ENCODE measurements at regions of chr2 and their contacts with region 1.

Region 1: DNA sequence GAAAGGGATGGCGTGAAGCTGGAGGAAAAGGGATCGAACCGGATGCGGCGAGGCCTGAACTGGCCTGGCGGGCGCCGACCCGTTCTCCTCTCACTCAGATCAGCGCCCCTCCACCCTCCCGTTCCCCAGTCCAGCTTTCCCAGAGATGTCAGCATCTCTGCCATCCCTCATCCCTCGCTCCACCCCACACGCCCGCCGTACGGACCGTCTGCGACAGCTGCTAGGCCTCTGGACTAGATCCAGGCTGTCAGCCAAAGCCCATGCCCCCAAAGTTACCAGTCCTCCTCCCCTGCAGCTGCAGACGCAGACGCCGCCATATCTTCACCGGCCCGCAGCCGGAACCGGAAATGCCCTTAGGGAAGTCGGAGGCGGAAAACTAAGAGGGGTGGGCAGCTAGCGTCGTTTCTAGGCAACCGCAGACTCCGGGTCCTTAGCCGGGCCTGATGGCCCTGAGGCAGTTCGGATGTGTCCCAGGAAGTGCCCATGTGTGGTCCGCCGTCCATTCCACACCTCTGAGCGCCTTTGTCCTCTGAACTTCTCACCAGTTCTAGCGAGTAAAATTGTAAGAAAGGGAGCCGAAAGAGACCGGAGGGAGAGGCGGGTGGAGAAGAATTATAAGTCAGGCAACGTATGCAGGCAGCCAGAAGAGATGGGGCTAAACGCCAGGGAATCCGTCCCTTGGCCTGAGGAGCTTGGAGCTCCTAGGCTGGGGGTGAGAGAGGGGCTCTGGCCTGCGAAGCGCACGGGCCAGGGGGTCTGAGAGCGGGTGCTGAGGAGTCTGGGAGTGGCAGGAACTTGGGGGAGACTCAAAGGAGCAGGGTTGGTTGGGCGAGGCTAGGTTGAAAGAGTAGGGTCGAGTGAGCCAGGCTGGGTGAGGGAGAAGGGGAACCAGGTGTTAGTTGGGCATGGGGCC is at the starts of genes RNF25 and STK36:
- DNase-seq: no peak
- H3K4me3 ChIP-seq: peak within 1 kb of the TSS; percentile 88
- CTCF ChIP-seq: no peak

Region 2: GRCh38 chr2:218659258-218659987 is 12.5 kb before region 1 on chr2 and contains the starts of genes BCS1L and ZNF142:
- CTCF ChIA-PET with region 1: interaction called, 65 read pairs
- POLR2A ChIA-PET with region 1: interaction called, 48 read pairs
- DNase-seq: no peak
- H3K4me3 ChIP-seq: peak within 1 kb of the TSS; percentile 85
- CTCF ChIP-seq: no peak

Region 3: DNA sequence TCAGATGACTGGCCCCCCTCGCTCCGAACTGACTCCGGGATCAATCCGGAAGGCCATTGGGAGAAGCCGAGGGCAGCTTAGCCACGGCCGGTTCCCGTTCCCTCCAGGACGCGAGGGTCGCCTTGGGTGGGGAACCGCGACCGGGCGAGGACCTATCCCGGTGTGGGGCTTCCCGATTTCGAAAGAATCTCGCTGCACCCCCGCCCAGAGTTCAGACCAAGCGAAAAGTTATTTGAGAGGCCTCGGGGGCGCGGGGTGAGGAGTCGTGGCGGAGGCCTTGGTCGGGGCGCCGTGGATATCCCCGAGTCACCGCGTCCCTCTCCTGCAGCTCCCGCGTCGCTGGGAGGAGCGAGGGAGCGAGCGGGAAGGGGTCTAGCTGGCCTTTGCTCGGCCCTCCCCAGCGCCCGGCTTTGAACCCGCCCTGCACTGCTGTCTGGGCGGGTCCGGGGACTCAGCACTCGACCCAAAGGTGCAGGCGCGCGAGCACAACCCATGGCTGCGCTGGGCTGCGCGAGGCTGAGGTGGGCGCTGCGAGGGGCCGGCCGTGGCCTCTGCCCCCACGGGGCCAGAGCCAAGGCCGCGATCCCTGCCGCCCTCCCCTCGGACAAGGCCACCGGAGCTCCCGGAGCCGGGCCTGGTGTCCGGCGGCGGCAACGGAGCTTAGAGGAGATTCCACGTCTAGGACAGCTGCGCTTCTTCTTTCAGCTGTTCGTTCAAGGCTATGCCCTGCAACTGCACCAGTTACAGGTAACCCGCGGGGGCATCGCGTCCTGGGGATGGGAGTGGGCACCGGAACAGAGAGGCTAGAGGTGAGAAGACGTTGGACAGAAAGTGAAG is 110.0 kb after region 1 on chr2 and contains the start of gene CYP27A1:
- CTCF ChIA-PET with region 1: no interaction called
- POLR2A ChIA-PET with region 1: no interaction called
- DNase-seq: no peak
- H3K4me3 ChIP-seq: peak within 1 kb of the TSS; percentile 58
- CTCF ChIP-seq: no peak

Measured in AG04449 (cell line).